B cell (primary cell): ENCODE measurements at regions of chr2 and their contacts with region 1.

Region 1: DNA sequence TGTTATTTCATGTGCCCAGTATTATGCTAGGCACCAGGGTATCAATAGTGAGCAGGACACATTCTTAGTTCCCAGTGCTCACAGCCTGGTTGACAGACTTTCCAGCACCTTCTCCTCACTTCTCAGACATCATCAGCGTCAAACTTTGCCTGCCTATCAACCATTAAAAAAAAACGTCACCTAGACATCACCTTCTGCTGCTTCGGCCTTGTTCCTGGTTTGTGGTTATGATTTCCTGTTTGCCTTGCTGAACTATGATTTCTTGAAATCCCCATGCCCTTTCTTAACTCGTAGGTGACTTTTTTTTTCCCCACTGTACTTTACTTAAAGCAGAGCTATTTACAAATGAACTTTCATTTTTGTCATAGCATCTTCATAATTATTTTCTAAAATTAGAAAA is 60.4 kb upstream of the NABP1 start:
- DNase-seq: peak; percentile 88
- ATAC-seq: peak; percentile 95
- H3K4me3 ChIP-seq: peak overlapping the region in 1 of 5 experiments; percentile 2
- H3K4me3 Mint-ChIP-seq: peak overlapping the region; percentile 62
- H3K27ac ChIP-seq: peak overlapping the region; percentile 77 to 86
- H3K27ac Mint-ChIP-seq: peak overlapping the region; percentile 88
- H3K4me1 ChIP-seq: peaks cover 23 to 29% of the 10 kb centered on the region in 2 donors
- H3K4me1 Mint-ChIP-seq: peaks cover 52% of the 10 kb centered on the region
- H3K27me3 ChIP-seq: no peaks in the 10 kb centered on the region
- H3K27me3 Mint-ChIP-seq: no peaks in the 10 kb centered on the region
- CTCF ChIP-seq: no peak

Region 2: DNA sequence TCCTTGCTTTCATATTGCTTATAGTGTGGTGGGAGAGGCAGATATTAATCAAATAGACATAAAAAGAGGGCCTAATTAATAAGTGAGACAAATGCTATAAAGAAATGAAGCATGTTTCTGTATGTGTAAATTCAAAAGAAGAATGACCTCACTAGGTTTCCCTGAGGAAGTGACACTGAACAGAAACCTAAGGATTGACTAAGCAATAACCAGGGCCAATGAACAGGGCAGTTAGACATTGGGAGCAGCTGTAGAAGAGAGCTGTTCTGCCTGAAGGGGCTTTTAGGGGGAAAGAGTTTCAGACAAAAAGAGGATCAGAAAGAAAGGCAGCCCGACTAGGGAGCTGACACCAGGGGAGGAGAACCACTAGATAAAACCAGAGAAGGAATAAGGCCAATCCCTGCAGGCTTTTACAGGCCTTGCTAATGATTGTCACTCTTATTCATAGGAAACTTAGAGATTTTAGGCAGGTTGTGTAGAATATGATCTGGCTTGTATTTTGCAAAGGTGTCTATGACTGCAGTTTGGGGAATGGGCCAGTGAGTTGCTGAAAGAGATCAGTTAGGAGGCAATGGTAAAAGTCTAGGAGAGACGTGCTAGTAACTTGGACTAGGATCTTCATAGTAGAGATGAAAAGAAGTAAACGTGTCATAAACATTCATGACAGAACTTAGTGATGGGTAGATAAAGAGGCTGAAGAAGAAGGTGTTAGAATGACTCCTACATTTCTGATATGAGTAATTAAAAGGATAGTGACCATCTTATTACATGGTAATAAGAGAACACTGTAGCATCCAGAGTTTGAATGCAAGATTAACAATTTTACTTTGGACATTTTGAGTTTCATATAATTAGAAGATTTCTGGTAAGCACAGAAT is 33.6 kb after region 1 on chr2:
- CTCF ChIA-PET with region 1: no interaction called
- POLR2A ChIA-PET with region 1: interaction called, 10 read pairs
- intact Hi-C with region 1: no loop called
- DNase-seq: no peak
- ATAC-seq: no peak
- H3K4me3 ChIP-seq: no peak overlapping the region
- H3K4me3 Mint-ChIP-seq: no peak overlapping the region
- H3K27ac ChIP-seq: no peak overlapping the region
- H3K27ac Mint-ChIP-seq: no peak overlapping the region
- H3K4me1 ChIP-seq: no peaks in the 10 kb centered on the region
- H3K4me1 Mint-ChIP-seq: no peaks in the 10 kb centered on the region
- H3K27me3 ChIP-seq: no peaks in the 10 kb centered on the region
- H3K27me3 Mint-ChIP-seq: no peaks in the 10 kb centered on the region
- CTCF ChIP-seq: no peak